ENCODE measurements at regions of chr4 and their contacts with region 1.

Region 1: DNA sequence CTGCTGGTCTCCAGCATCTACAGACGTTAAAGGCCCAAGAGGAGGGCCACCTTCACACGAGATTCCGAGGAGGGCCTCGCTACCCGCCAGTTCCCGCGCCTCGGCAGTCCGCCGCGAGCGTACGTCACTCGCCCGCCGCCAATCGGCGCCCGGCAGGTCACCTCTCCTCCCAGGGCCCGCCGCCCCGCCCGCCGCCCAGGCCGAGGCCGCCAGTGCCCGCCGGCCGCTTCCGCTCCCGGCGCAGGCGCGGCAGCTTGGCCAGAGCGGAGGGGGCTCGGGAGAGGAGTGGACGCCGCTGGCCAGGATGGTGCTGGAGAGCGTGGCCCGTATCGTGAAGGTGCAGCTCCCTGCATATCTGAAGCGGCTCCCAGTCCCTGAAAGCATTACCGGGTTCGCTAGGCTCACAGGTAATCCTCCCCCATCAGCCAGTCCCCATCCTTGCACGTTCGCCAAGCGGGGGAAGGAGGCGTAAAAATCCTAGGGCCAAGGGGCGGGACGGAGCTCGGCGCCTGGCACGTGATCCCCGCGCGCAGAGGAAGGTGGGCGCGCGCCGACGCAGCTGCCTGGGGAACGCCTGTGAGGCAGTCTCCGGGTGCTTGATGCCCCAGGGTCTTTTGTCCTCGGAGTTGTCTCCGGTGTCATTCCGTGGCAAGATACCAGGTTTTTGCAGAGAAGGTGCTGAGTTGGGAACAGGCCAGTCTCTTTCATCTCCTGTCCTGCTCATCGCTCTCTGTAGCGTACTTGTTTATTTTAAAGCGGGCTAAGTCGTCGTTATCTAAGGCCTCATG is at the start of gene CISD2:
- DNase-seq: peak; percentile 95
- ATAC-seq: peak; percentile 86
- H3K4me3 Mint-ChIP-seq: peak within 1 kb of the TSS; percentile 88
- H3K27ac Mint-ChIP-seq: peak within 1 kb of the TSS; percentile 99
- H3K4me1 Mint-ChIP-seq: peaks cover 54% of the 10 kb centered on the region
- H3K27me3 Mint-ChIP-seq: no peaks in the 10 kb centered on the region
- CTCF ChIP-seq: no peak
- total RNA-seq, gene CISD2: 31.1 to 32.3 TPM

Region 2: DNA sequence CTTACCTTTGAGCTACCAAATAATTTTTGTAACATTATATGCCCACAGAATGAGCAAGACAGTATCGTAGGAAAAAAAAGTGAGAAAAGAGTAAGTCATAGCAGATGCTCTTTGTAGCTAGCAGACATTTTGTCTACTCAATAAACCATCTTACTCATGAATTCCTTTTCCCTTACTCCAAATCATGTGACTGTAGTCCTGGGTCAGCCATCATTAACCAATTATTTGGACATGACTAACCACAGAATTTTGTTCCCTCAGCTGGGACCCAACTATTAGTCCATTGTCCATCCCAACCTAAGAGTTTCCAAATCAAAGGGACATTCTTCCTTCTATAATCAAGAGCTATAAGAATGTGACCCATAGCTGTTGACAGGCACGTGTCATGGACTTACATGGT is 53.0 kb before region 1 on chr4:
- CTCF ChIA-PET with region 1: interaction called, 4 read pairs
- POLR2A ChIA-PET with region 1: interaction called, 22 read pairs
- intact Hi-C with region 1: no loop called
- DNase-seq: no peak
- ATAC-seq: no peak
- H3K4me3 Mint-ChIP-seq: no peak overlapping the region
- H3K27ac Mint-ChIP-seq: peak overlapping the region; percentile 85
- H3K4me1 Mint-ChIP-seq: peaks cover 86% of the 10 kb centered on the region
- H3K27me3 Mint-ChIP-seq: no peaks in the 10 kb centered on the region
- CTCF ChIP-seq: no peak

Region 3: GRCh38 chr4:103089481-103089880 is 220.5 kb after region 1 on chr4:
- CTCF ChIA-PET with region 1: no interaction called
- POLR2A ChIA-PET with region 1: no interaction called
- intact Hi-C with region 1: no loop called
- DNase-seq: no peak
- ATAC-seq: no peak
- H3K4me3 Mint-ChIP-seq: no peak overlapping the region
- H3K27ac Mint-ChIP-seq: no peak overlapping the region
- H3K4me1 Mint-ChIP-seq: peaks cover 16% of the 10 kb centered on the region
- H3K27me3 Mint-ChIP-seq: no peaks in the 10 kb centered on the region
- CTCF ChIP-seq: no peak

Measured in activated CD8-positive, alpha-beta T cell treated with anti-CD3 and anti-CD28 coated beads for 36 hours (primary cell).